Endothelial cell of umbilical vein (primary cell): ENCODE measurements at regions of chr16 and their contacts with region 1.

Region 1: GRCh38 chr16:89945670-89946069 is 2.9 kb upstream of the DEF8 start:
- DNase-seq: no peak
- H3K4me3 ChIP-seq: no peak overlapping the region
- H3K27ac ChIP-seq: no peak overlapping the region
- H3K4me1 ChIP-seq: peaks cover 4% of the 10 kb centered on the region
- H3K27me3 ChIP-seq: peaks cover 0 to 4% of the 10 kb centered on the region in 2 experiments
- CTCF ChIP-seq: no peak
- POLR2A ChIP-seq: no peak

Region 2: DNA sequence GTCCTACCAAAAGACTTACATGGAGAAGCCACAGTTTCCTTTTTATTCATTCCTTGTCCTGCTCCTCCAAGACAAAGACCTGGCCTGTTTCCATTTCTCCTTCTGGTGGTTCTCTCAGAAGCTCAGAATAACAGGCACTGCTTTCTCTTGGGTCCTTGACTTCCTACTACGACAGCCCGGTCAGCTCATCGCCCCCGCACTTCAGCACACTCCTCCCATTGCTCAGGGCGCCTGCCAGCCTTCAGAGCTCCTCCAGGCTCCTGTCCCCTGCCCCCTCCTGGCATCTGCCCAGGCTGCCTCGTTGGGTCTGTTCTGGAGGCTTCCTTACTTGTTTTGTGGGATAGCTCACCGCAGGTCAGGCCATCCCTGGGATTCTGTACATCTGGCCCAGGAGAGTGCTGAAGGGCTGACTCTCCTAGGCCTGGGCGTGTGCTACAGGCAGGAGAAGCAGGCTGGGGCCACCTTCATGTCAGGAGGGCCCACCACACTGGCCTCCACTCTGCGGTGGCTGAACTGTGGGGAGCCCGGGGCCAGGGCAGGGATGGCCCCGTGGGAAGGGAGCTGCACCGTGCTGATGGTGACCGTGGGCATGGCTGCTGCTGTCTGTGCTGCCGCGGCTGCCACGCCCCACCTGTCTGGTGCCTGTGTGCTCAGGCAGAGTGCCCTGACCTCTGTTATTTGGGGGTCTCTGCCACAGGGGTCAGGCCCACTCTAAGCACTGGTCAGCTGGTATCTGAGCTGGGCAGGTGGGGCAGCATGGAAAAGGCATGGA is 54.6 kb before region 1 on chr16:
- CTCF ChIA-PET with region 1: no interaction called
- POLR2A ChIA-PET with region 1: no interaction called
- dilution Hi-C with region 1: no loop called
- intact Hi-C with region 1: no loop called
- DNase-seq: no peak
- H3K4me3 ChIP-seq: no peak overlapping the region
- H3K27ac ChIP-seq: no peak overlapping the region
- H3K4me1 ChIP-seq: no peaks in the 10 kb centered on the region
- H3K27me3 ChIP-seq: no peaks in the 10 kb centered on the region
- CTCF ChIP-seq: no peak
- POLR2A ChIP-seq: no peak

Region 3: GRCh38 chr16:90022209-90023064 is 76.8 kb after region 1 on chr16:
- CTCF ChIA-PET with region 1: interaction called, 3 read pairs
- POLR2A ChIA-PET with region 1: no interaction called
- dilution Hi-C with region 1: no loop called
- intact Hi-C with region 1: loop called (anchors 2 kb)
- DNase-seq: peak; percentile 93
- H3K4me3 ChIP-seq: peak overlapping the region; percentile 42 to 64 (median 57)
- H3K27ac ChIP-seq: peak overlapping the region; percentile 48
- H3K4me1 ChIP-seq: peaks cover 18% of the 10 kb centered on the region
- H3K27me3 ChIP-seq: no peaks in the 10 kb centered on the region
- CTCF ChIP-seq: no peak
- POLR2A ChIP-seq: peak; percentile 81